ENCODE measurements at regions of chr7 and their contacts with region 1.

Region 1: DNA sequence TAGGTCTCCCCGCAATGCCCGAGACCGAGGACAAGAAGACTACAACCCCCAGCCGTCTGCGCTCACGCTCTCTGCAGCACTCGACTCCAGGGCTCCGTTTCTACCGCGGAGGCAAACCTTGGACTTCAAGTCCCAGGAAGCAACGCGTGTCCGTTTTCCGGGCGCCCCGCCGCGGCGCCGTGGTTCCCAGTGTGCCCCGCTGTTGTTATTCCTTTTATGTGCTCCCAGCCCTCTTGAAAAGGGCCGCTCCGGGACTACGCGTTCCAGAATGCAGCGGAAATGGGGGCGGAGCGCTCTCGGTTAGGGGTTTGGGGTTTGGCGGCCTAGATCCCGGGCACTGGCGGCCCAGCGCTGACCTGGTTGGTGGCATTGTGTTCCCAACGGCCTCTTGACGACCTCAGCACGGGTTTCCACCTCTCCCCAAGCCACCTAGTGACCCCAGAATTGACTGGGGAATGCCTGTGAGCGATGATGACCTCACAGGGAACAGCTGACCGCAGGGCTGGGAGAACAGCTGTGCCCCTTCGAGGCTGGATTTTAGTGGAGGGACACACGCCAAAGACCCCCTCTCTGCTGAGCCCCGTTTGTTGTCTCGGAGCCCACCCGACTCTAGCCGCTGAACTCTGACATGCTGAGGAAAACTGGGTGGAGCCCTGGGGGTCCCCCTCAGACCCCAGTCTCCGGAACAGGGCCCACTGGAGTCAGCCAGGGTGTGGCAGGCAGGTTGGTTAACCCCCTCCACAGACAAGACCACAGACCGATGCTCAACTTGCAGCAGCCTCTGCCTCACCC is 488 bp upstream of the CDK5 start:
- DNase-seq: peak; percentile 100
- ATAC-seq: peak; percentile 85 to 87
- H3K4me3 ChIP-seq: peak overlapping the region; percentile 71 to 92 (median 86)
- H3K27ac ChIP-seq: peak overlapping the region; percentile 93 to 99 (median 98)
- H3K4me1 ChIP-seq: peaks cover 22 to 44% of the 10 kb centered on the region in 2 donors
- H3K27me3 ChIP-seq: no peaks in the 10 kb centered on the region
- CTCF ChIP-seq: no peak
- POLR2A ChIP-seq: peak; percentile 84 to 99

Region 2: GRCh38 chr7:149883452-149883861 is 1174.7 kb before region 1 on chr7:
- in situ Hi-C with region 1: no loop called
- intact Hi-C with region 1: no loop called
- DNase-seq: no peak
- ATAC-seq: peak in 1 of 2 donors; percentile 39
- H3K4me3 ChIP-seq: no peak overlapping the region
- H3K27ac ChIP-seq: no peak overlapping the region
- H3K4me1 ChIP-seq: no peaks in the 10 kb centered on the region
- H3K27me3 ChIP-seq: no peaks in the 10 kb centered on the region
- CTCF ChIP-seq: peak in 4 of 5 experiments; percentile 25 to 58 (median 48)
- POLR2A ChIP-seq: no peak

Region 3: DNA sequence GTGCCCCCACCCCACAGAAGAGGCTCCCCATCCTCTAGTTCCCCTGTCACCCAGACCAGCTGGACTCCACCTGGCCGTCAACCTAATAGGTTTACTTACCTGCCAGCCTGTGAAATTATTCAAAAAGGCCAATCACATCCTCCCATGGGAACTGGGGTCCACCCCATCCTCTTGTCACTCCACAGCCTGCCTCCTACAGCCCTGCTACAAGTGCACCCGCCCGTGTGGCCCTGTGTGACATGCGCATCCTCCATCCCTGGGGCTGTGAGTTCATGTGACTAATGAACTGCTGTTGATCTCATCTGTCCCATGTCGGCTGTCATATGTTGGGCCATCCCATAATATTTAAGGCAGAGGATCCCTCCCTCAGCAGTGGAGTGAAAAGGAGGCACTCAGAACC is 166.4 kb before region 1 on chr7:
- in situ Hi-C with region 1: no loop called
- intact Hi-C with region 1: no loop called
- DNase-seq: no peak
- ATAC-seq: no peak
- H3K4me3 ChIP-seq: no peak overlapping the region
- H3K27ac ChIP-seq: no peak overlapping the region
- H3K4me1 ChIP-seq: no peaks in the 10 kb centered on the region
- H3K27me3 ChIP-seq: peaks cover 0 to 10% (median 0%) of the 10 kb centered on the region in 3 donors
- CTCF ChIP-seq: no peak
- POLR2A ChIP-seq: no peak

Region 4: DNA sequence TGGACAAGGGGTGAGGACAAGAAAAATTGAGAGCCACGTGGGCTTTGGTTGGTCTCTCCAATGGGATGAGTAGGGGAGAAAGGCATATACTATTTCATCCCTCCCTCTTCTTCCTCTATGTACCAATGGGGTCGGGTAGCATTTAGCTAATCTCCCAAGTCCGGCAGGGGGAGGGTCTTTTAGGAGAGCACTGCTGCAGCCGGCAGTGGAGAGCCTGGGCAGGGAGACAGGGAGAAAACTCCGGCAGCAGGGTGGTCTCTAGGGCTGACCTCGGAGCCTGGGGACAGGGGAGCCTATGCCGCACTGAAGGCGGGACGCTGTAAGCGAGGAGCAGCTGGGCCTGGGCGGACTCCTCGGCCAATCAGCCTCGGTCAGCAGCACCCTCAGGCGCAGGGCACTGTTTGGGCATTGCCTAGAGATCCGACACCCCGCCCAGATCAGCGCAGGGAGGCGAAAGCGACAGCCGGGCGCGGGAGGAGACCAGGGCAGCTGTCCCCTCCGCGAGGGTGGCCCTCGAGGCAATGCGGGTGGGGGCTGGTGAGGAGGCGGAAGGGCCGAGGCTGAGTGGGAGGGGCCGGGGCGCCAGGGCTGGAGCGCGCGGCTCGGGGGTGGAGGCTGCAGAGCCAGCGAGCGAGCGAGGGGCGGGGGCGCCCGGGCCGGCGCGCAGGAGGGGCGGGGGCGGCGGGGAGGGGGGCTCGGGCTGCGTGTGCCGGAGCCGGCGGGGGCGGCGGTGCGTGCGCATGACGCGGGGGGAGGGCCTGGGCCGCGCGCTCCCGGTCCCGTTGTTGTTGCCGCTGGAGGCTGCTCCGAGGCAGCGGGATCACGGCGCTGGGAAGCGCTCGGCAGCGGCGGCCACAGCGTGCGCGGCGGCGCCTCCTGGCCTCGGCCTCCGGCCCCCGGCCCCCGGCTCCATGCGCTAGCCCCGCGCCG is 27.8 kb after region 1 on chr7 and contains the start of gene AGAP3:
- in situ Hi-C with region 1: no loop called
- intact Hi-C with region 1: loop called (anchors 1 kb)
- DNase-seq: peak; percentile 83 to 86
- ATAC-seq: peak; percentile 44 to 55
- H3K4me3 ChIP-seq: peak within 1 kb of the TSS; percentile 72 to 95 (median 84)
- H3K27ac ChIP-seq: peak within 1 kb of the TSS; percentile 86 to 96 (median 92)
- H3K4me1 ChIP-seq: peaks cover 44 to 56% of the 10 kb centered on the region in 2 donors
- H3K27me3 ChIP-seq: no peaks in the 10 kb centered on the region
- CTCF ChIP-seq: no peak
- POLR2A ChIP-seq: peak; percentile 79 to 85
- total RNA-seq, gene AGAP3: 31.1 to 65.3 (median 36.3) TPM

Region 5: GRCh38 chr7:151185762-151186631 is 127.8 kb after region 1 on chr7:
- in situ Hi-C with region 1: no loop called
- intact Hi-C with region 1: no loop called
- DNase-seq: peak in 1 of 2 donors; percentile 55
- ATAC-seq: peak; percentile 28 to 33
- H3K4me3 ChIP-seq: peak overlapping the region; percentile 57 to 62 (median 60)
- H3K27ac ChIP-seq: peak overlapping the region; percentile 91 to 100 (median 99)
- H3K4me1 ChIP-seq: peaks cover 32 to 41% of the 10 kb centered on the region in 2 donors
- H3K27me3 ChIP-seq: no peaks in the 10 kb centered on the region
- CTCF ChIP-seq: peak in 2 of 5 experiments; percentile 12 to 40
- POLR2A ChIP-seq: no peak

Region 6: DNA sequence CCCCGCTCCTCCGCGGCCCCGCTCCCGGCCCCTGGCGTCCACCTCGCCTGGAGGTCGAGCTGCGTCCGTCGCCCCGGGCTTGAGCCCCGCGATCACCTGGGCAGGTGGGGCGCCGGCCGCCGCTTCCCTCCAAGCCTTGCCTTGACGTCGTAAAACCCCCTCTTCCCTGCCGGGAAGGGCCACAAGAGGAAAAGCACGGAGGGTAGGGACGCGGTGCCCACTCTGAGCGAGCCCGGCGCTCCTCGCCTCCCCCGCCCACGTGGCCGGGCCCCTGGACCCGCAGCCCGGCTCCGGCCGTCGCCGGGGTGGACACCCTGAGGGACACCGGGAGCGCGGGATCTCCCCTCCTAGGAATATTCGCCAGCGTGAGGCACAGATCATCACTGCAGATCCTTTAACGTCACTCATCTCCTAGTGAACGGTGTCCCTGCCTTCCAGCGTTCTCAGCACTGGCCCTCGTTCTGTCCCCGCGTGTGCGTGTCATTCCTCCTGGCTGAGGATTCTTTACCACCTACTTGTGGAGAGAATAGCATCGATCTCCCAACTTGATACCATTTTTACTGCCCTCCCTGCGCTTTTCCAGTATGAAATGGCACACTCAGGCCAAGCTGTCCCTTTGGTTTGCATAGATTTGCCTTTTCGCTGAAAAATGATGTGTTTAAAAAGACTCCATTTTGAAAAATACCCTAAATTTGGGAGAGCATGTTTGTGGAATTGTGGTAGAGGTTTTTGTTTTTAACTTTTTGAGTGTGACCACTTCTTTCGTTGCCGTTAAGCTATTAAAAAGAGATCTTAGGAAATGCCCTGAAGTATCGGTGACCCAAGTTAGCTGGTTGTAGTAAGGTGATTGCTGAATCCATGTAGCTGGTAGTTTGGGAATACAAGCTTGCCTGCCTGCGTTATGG is 1702.0 kb after region 1 on chr7:
- in situ Hi-C with region 1: no loop called
- intact Hi-C with region 1: loop called (anchors 5 kb)
- DNase-seq: peak; percentile 10 to 34
- ATAC-seq: peak; percentile 59 to 69
- H3K4me3 ChIP-seq: peak overlapping the region; percentile 79 to 96 (median 86)
- H3K27ac ChIP-seq: peak overlapping the region; percentile 94 to 100 (median 98)
- H3K4me1 ChIP-seq: peaks cover 23 to 25% of the 10 kb centered on the region in 2 donors
- H3K27me3 ChIP-seq: no peaks in the 10 kb centered on the region
- CTCF ChIP-seq: no peak
- POLR2A ChIP-seq: peak in 1 of 2 donors; percentile 41